ENCODE measurements at regions of chr14 and their contacts with region 1.

Region 1: DNA sequence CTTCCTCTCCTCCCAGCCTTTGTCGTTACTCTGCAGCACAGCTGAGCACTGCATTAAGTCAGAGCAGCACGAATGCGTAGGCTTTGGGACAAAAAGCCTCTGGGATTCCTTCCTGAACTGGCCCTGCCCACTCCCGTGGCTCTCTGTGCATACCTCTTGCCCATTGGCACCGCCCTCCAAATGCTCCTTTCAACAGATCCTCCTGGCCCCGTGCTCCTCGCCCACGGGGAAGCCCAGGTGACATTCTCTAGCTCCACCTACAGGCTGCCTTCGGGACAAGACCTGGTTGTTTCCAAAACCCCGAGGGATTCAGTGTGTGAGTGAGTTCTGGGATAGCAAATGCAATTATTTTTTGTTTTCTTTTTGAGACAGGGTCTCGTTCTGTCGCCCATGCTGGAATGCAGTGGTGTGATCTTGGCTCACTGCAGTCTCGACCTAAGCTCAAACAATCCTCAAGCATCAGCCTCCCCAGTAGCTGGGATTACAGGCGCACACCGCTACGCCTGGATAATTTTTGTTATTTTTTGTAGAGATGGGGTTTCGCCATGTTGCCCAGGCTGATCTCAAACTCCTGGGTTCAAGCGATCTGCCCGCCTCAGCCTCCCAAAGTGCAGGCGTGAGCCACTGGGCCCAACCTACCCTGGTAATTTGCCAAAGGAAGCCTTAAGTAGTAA is 17.9 kb upstream of the TDRD9 start:
- DNase-seq: peak; percentile 7
- H3K4me3 ChIP-seq: no peak overlapping the region
- H3K27ac ChIP-seq: no peak overlapping the region
- H3K27me3 ChIP-seq: no peaks in the 10 kb centered on the region
- CTCF ChIP-seq: peak; percentile 79

Region 2: DNA sequence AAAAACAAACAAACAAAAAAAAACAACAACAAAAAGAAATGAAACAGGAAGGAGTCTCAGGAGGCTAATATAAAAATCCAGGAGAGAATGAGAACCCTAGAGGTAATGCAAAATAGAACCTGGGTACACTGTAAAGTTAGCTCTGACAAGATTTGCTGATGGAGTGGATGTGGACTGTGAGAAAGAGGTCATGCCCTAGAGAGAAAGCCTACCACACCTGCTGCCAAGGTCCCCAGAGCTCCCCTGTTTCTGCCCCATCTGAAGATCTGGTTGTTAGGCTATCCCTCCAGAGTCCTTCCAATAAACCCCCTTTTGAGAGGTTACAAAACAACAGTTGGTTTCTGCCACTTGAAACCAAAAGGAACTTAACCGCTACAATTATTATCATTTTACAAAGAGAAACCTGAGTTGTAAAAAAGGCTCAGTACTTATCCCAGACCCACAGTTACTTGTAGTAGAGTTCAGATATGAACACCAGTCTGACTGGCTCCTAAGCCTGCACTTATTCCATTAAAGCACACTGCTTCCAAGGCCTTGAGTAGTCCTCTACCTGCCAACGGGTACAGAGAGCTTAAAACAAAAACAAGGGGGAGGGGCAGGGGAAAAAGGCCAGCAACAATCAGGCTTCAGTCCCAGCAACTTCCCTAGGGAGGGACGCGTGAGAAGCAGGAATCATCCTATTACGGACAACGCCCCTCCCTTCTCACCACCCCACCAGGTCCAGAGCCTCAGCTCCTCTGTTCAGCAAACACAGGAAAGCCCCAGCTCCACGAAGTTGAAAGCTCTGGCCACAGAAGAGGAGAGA is 90.7 kb before region 1 on chr14:
- CTCF ChIA-PET with region 1: no interaction called
- POLR2A ChIA-PET with region 1: no interaction called
- DNase-seq: no peak
- H3K4me3 ChIP-seq: no peak overlapping the region
- H3K27ac ChIP-seq: no peak overlapping the region
- H3K27me3 ChIP-seq: peaks cover 13% of the 10 kb centered on the region
- CTCF ChIP-seq: no peak

Region 3: GRCh38 chr14:103893981-103894722 is 16.2 kb before region 1 on chr14:
- CTCF ChIA-PET with region 1: no interaction called
- POLR2A ChIA-PET with region 1: no interaction called
- DNase-seq: no peak
- H3K4me3 ChIP-seq: no peak overlapping the region
- H3K27ac ChIP-seq: no peak overlapping the region
- H3K27me3 ChIP-seq: peaks cover 4% of the 10 kb centered on the region
- CTCF ChIP-seq: no peak

Region 4: DNA sequence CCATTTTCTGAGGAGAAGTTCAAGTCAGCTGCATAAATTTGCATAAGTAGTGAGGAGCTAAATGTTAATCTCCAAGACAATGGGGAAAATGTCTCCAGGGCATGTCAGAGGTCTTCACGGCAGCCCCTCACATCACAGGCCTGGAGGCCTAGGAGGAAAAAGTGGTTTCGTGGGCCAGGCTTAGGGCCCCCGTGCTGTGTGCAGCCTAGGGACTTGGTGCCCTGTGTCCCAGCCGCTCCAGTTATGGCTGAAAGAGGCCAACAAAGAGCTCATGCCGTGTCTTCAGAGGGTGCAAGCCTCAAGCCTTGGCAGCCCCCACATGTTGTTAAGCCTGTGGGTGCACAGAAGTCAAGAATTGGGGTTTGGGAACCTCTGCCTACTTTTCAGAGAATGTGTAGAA is 73.8 kb after region 1 on chr14:
- CTCF ChIA-PET with region 1: interaction called, 10 read pairs
- POLR2A ChIA-PET with region 1: no interaction called
- DNase-seq: no peak
- H3K4me3 ChIP-seq: no peak overlapping the region
- H3K27ac ChIP-seq: no peak overlapping the region
- H3K27me3 ChIP-seq: no peaks in the 10 kb centered on the region
- CTCF ChIP-seq: no peak

Measured in AG04450 (cell line).